Activated naive CD8-positive, alpha-beta T cell treated with anti-CD3 and anti-CD28 coated beads, Interleukin-2, amount 10 ng/mL, durations not matched to agents 7 days and 5 days (primary cell): ENCODE measurements at regions of chr10 and their contacts with region 1.

Region 1: DNA sequence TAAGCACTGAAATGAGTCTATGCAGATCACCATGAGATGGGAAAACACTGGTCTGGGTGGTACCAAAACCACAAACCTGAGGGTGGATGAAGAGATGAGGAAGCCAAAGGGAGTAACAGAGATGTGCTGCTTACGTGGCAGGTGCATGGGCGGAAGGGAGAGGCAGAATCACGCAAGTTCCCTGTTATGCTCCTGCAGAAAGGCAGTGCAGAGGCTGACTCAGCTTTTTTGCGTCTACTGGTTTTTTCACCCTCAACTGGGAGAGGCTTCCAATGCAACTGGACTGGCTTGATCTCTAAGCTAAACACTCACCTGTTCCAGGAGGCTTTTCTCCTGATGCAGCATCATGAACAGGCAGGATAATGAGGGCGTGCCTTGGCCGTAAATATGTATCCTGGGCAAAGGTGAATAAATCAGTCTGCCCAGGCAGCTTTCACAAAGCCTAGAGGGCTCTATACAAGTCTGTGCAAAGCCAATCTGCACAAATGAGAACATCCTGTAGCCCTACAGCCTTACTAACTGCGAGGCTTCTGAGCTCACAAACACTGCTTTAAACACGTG is 95.4 kb upstream of the AFAP1L2 start:
- DNase-seq: no peak
- ATAC-seq: peak; percentile 67
- H3K4me3 Mint-ChIP-seq: peak overlapping the region; percentile 72
- H3K27ac Mint-ChIP-seq: peak overlapping the region; percentile 90
- H3K4me1 Mint-ChIP-seq: peaks cover 75% of the 10 kb centered on the region
- H3K27me3 Mint-ChIP-seq: no peaks in the 10 kb centered on the region

Region 2: DNA sequence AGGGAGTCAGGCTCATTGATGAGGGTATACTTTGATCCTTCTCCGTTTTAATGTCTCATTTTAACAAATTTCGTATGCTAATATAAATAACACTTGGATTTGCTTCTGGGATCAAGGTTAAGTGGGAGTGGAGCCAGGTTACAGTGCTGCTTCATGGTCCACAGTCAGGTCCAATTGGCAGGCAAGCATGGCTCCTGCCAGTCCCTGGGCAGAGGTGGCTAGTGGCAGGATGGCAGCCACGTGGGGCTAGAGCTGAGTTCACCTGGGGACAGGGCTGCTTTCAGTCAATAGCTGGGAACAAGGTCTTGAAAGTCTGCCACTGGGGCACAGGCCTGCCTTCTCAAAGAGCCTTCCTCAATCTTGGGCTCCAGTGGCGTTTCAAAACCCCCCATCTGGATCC is 276.6 kb before region 1 on chr10:
- POLR2A ChIA-PET with region 1: no interaction called
- DNase-seq: no peak
- ATAC-seq: no peak
- H3K4me3 Mint-ChIP-seq: no peak overlapping the region
- H3K27ac Mint-ChIP-seq: no peak overlapping the region
- H3K4me1 Mint-ChIP-seq: no peaks in the 10 kb centered on the region
- H3K27me3 Mint-ChIP-seq: peaks cover 27% of the 10 kb centered on the region

Region 3: DNA sequence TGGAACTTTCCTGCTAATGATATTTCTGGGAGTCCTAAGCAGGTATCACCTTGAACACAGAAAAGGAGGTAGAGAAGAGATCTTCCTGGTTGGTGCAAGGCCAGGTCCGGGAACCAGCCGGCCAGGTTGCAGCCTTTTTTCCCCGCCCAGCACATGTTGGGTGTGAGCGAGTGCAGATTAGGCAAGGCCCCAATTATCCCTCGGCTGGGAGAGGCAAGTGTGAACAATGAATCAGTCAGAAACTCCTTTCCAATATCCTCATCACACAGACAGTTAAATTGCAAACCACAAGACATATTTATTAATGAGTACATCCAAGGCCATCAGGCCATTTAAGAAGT is 19.5 kb after region 1 on chr10:
- POLR2A ChIA-PET with region 1: interaction called, 43 read pairs
- DNase-seq: no peak
- ATAC-seq: no peak
- H3K4me3 Mint-ChIP-seq: peak overlapping the region; percentile 58
- H3K27ac Mint-ChIP-seq: peak overlapping the region; percentile 87
- H3K4me1 Mint-ChIP-seq: peaks cover 84% of the 10 kb centered on the region
- H3K27me3 Mint-ChIP-seq: no peaks in the 10 kb centered on the region

Region 4: DNA sequence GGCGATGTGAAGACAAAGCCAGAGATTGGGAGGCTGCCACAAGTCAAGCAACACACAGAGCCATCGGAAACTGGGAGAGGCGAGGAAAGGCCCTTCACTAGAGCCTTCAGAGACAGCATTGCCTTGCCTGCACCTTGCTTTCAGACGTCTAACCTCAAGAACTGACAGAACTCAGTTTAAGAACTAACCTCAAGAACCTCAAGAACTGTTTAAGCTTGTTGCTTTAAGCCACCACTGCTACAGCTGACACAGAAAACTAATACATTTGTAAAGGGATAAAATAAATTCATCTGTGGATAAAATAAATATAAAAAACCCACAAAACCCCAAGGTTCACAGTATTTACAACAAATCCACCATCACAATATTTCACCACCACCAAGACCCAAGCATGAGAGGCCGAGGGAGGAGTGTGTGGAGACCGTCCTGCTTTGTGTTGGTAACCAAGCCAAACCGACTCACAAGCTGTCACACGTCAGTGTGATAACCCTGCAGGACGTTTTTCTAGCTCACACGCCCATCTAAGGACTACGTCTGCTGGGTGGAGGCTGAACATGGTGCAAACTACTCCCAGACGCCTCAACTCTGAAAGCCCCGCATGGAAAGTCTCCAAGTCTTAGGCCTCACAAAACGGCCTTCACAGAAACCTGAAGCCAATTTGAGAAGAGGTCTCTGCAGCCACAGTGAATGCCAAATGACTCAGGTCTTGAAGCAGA is 41.5 kb after region 1 on chr10:
- POLR2A ChIA-PET with region 1: interaction called, 11 read pairs
- DNase-seq: peak; percentile 63
- ATAC-seq: peak; percentile 78
- H3K4me3 Mint-ChIP-seq: peak overlapping the region; percentile 80
- H3K27ac Mint-ChIP-seq: peak overlapping the region; percentile 100
- H3K4me1 Mint-ChIP-seq: peaks cover 78% of the 10 kb centered on the region
- H3K27me3 Mint-ChIP-seq: no peaks in the 10 kb centered on the region